Mammary epithelial cell (primary cell): ENCODE measurements at regions of chr6 and their contacts with region 1.

Region 1: DNA sequence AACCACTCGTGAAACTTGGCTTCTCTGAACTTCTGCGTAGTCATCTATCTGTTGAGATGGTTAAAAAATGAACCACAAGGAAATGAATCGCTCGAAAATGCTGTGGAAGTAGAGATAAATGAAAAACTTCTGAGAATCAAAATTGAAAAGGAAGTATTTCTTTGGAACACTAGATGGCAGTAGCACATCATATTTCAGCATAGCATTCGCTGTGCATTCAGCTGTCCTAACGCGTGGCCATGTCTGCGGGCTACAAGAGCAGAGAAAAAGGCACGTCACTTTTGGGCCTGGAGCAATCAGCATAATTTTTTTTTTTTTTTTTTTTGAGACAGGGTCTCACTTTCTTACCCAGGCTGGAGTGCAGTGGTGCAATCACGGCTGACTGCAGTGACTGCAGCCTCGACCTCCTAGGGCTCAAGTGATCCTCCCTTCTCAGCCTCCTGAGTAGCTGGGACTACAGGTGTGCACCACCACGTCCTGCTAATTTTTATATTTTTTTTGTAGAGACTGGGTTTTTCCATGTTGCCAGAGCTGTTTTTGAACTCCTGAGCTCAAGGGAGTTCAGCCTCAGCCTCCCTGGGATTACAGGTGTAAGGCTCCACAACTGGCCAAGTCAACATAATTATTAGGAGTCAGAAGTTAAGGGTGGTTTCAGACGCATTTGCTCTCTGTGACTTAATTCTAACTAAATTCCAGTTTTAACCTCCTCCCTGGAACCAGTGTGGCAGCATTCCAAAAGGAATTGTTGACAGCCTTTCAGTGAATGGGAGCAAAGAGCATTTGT is 8.8 kb upstream of the PERP start:
- DNase-seq: peak; percentile 44
- H3K4me3 ChIP-seq: no peak overlapping the region
- H3K27ac ChIP-seq: no peak overlapping the region
- H3K4me1 ChIP-seq: no peaks in the 10 kb centered on the region
- H3K27me3 ChIP-seq: no peaks in the 10 kb centered on the region
- CTCF ChIP-seq: peak; percentile 54 to 65

Region 2: GRCh38 chr6:137883400-137884148 is 232.5 kb before region 1 on chr6:
- CTCF ChIA-PET with region 1: no interaction called
- dilution Hi-C with region 1: no loop called
- in situ Hi-C with region 1: no loop called
- intact Hi-C with region 1: no loop called
- DNase-seq: peak; percentile 64
- H3K4me3 ChIP-seq: no peak overlapping the region
- H3K27ac ChIP-seq: no peak overlapping the region
- H3K4me1 ChIP-seq: peaks cover 11% of the 10 kb centered on the region
- H3K27me3 ChIP-seq: no peaks in the 10 kb centered on the region
- CTCF ChIP-seq: no peak

Region 3: DNA sequence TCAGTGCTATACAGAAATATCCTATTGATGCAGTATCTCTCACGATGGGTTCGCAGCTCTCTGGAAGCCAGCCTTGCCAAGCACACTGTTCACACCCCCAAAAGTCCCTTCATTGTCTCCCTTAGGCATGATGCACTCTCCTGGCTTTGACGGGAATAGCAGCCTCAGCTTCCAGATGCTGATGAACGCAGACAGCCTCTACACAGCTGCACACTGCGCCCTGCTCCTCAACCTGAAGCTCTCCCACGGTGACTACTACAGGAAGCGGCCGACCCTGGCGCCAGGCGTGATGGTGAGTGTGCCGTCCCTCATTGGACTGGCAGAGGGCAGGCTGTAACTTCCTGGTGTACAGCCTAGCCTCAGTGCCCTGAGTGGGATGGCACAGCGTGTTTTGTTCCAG is 162.3 kb after region 1 on chr6:
- CTCF ChIA-PET with region 1: no interaction called
- dilution Hi-C with region 1: no loop called
- in situ Hi-C with region 1: loop called in 1 of 2 experiments (anchors 10 kb)
- intact Hi-C with region 1: loop called (anchors 1 kb)
- DNase-seq: no peak
- H3K4me3 ChIP-seq: no peak overlapping the region
- H3K27ac ChIP-seq: no peak overlapping the region
- H3K4me1 ChIP-seq: no peaks in the 10 kb centered on the region
- H3K27me3 ChIP-seq: no peaks in the 10 kb centered on the region
- CTCF ChIP-seq: peak; percentile 27 to 43

Region 4: DNA sequence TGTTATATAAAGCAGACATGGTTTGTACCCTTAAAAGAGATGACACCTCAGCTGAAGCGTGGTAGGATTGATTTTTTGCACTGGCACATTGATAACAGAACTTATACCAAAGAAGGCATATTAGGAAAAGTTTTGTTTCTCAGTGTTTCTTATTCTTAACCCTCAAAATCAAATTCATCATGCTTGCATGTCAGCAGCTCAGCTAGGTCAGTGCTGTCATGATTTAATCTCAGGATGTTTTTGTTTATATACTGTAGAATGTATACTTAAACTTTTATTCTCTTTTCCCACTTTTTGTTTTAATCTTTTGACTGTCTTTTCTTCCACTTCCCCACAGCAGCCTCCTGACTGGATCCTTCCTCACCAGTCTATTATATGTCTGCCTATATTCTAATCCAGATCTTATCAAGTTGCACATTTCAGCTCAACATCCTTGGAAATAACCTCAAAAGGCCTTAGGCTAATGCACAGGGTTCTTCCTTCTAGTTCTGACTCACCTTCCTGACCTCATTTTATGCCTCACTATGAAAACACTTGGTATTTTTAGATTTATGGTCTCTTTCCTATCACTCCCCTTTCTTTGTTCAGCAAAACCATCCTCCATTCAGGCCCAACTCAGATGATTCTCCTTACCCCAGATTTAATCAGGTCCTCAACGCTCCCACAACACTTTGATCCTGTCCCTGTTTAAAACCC is 295.1 kb after region 1 on chr6:
- CTCF ChIA-PET with region 1: no interaction called
- dilution Hi-C with region 1: no loop called
- in situ Hi-C with region 1: loop called (anchors 10 kb)
- intact Hi-C with region 1: loop called (anchors 1 kb)
- DNase-seq: peak; percentile 94
- H3K4me3 ChIP-seq: no peak overlapping the region
- H3K27ac ChIP-seq: peak overlapping the region; percentile 63
- H3K4me1 ChIP-seq: peaks cover 28% of the 10 kb centered on the region
- H3K27me3 ChIP-seq: no peaks in the 10 kb centered on the region
- CTCF ChIP-seq: no peak

Region 5: DNA sequence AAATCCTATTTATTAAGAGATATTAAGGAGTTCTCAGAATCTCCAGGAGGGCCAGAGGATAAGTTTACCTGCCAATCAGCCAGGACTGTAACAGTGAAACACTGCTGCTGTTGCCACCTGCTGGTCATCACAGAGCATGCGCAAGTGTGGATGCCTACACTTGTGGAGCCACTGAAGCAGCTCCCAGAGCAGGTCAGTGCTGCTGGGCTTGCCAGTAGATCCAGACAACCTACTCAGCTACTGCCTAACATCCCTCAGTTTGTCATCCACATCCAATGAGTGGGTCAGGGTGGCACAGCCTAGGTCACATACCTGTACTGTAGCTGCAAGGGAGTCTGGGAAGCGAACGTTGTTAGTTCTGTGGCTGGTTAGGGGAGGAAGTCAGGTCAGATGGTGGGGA is 401.6 kb after region 1 on chr6:
- CTCF ChIA-PET with region 1: no interaction called
- dilution Hi-C with region 1: no loop called
- in situ Hi-C with region 1: loop called (anchors 10 kb)
- intact Hi-C with region 1: no loop called
- DNase-seq: peak; percentile 48
- H3K4me3 ChIP-seq: no peak overlapping the region
- H3K27ac ChIP-seq: no peak overlapping the region
- H3K4me1 ChIP-seq: peaks cover 8% of the 10 kb centered on the region
- H3K27me3 ChIP-seq: no peaks in the 10 kb centered on the region
- CTCF ChIP-seq: peak; percentile 87 to 95

Region 6: DNA sequence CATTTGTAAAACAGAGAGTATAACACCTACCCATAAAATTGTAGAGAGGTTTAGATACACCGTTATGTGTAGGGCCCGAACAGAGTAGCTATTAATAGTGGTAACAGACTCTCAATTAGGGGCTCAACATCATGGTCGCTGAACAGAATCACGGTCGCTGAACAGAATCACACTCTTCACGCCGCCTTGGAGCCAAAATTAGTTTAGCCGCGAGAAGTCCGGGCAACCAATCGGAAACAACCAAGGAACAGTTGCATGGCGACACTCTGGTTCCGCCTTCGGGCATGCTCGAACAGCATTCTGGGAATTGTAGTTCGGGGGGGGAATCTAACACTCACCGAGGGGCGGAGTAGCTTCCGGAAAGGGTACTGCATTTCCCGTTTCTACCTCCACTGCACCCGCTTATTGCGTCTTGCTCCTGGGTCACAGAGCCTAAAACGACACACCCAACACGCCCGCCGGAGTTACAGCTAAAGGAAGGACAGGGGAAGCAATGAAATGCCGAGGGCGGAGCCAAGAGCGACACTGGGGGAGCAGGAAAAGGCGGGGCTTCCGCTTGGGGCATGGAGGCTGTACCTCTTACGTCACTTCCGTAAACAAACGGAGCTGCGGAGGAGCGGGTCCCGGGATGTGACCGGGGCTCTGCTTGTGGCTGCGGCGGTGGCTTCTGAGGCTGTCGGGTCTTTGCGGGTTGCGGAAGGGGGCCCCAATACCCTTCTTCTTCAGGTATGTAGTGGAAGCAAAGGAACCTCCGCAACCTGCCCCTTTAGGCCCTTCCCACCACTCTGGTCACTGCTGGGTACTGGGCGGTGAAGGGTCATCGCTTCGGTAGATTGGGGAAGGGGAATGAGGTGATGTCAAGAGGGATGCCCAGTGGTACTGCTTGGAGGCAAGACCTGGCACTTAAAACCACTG is 657.4 kb after region 1 on chr6 and contains the start of gene CCDC28A:
- CTCF ChIA-PET with region 1: no interaction called
- dilution Hi-C with region 1: no loop called
- in situ Hi-C with region 1: loop called (anchors 25 kb)
- intact Hi-C with region 1: no loop called
- DNase-seq: peak; percentile 95
- H3K4me3 ChIP-seq: peak within 1 kb of the TSS; percentile 94 to 96 (median 95)
- H3K27ac ChIP-seq: peak within 1 kb of the TSS; percentile 81
- H3K4me1 ChIP-seq: peaks cover 14% of the 10 kb centered on the region
- H3K27me3 ChIP-seq: no peaks in the 10 kb centered on the region
- CTCF ChIP-seq: no peak
- total RNA-seq, gene CCDC28A: 7.3 to 10.3 TPM